CD8-positive, alpha-beta memory T cell (primary cell): ENCODE measurements at regions of chr17 and their contacts with region 1.

Region 1: GRCh38 chr17:40086150-40087044 is 14.0 kb downstream of the NR1D1 start:
- DNase-seq: peak in 4 of 5 donors; percentile 45 to 73 (median 54)
- H3K4me3 ChIP-seq: no peak overlapping the region
- H3K4me3 Mint-ChIP-seq: no peak overlapping the region
- H3K27ac ChIP-seq: no peak overlapping the region
- H3K27ac Mint-ChIP-seq: peak overlapping the region in 6 of 8 donors; percentile 11 to 78 (median 46)
- H3K4me1 ChIP-seq: peaks cover 6% of the 10 kb centered on the region
- H3K4me1 Mint-ChIP-seq: peaks cover 5 to 13% (median 12%) of the 10 kb centered on the region in 3 donors
- H3K27me3 ChIP-seq: no peaks in the 10 kb centered on the region
- H3K27me3 Mint-ChIP-seq: no peaks in the 10 kb centered on the region

Region 2: DNA sequence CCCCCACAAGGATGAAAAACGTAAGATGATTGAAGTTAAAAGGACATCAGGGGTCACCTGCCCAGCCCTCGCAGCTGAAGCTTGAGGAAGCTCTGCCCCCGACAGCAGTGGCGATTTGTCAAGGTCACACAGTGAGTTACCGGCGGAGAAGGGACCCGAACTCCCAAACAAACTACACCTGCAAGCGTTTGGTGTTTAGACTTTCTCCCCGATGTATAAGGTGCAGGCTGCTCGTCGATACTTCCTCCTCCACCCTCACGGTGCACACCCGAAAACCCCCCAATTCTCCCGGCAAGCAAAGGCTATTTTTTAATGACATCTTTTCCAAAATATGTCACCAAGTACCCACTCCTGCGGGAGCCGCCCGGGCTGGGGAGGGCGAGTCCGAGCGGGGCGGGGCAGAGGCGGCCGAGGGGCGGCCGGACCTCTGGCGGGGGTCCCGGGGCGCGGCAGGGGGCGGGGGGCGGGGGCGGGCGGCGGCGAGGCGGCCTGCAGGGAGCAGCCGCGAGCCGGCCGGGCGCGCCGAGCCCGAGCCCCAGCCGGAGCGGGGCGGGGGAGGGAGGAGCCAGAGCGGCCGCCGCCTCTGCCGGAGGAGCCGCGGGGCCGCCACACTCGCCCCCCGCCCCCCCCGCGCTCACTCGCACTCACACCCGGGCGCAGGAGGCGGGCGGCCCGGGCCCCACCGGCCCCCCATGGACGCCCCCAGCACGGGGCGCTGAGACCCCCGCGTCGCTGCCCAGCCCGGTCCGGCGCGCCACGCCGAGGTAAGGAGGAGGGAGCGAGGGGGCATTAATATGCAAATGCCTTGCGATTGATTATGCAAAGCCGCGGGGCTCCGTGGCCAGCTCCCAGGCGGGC is 23.8 kb before region 1 on chr17 and contains the start of gene THRA:
- CTCF ChIA-PET with region 1: interaction called, 23 read pairs
- POLR2A ChIA-PET with region 1: interaction called, 11 read pairs
- DNase-seq: peak; percentile 64 to 81 (median 70)
- H3K4me3 ChIP-seq: peak within 1 kb of the TSS; percentile 81
- H3K4me3 Mint-ChIP-seq: peak within 1 kb of the TSS; percentile 88 to 97 (median 91)
- H3K27ac ChIP-seq: peak within 1 kb of the TSS; percentile 73
- H3K27ac Mint-ChIP-seq: peak within 1 kb of the TSS; percentile 80 to 97 (median 90)
- H3K4me1 ChIP-seq: peaks cover 46% of the 10 kb centered on the region
- H3K4me1 Mint-ChIP-seq: peaks cover 37 to 49% (median 41%) of the 10 kb centered on the region in 3 donors
- H3K27me3 ChIP-seq: no peaks in the 10 kb centered on the region
- H3K27me3 Mint-ChIP-seq: peaks cover 0 to 2% of the 10 kb centered on the region in 2 donors
- total RNA-seq, gene THRA: 12.6 to 13.2 TPM

Region 3: GRCh38 chr17:40068917-40069750 is 17.3 kb before region 1 on chr17:
- CTCF ChIA-PET with region 1: interaction called, 23 read pairs
- POLR2A ChIA-PET with region 1: interaction called, 11 read pairs
- DNase-seq: peak; percentile 55 to 86 (median 66)
- H3K4me3 ChIP-seq: peak overlapping the region; percentile 68
- H3K4me3 Mint-ChIP-seq: peak overlapping the region; percentile 81 to 91 (median 88)
- H3K27ac ChIP-seq: peak overlapping the region; percentile 58
- H3K27ac Mint-ChIP-seq: peak overlapping the region; percentile 88 to 98 (median 96)
- H3K4me1 ChIP-seq: peaks cover 82% of the 10 kb centered on the region
- H3K4me1 Mint-ChIP-seq: peaks cover 62 to 86% (median 69%) of the 10 kb centered on the region in 3 donors
- H3K27me3 ChIP-seq: no peaks in the 10 kb centered on the region
- H3K27me3 Mint-ChIP-seq: no peaks in the 10 kb centered on the region

Region 4: GRCh38 chr17:40450175-40450574 is 363.8 kb after region 1 on chr17:
- CTCF ChIA-PET with region 1: no interaction called
- POLR2A ChIA-PET with region 1: no interaction called
- DNase-seq: peak in 2 of 5 donors; percentile 14
- H3K4me3 ChIP-seq: no peak overlapping the region
- H3K4me3 Mint-ChIP-seq: no peak overlapping the region
- H3K27ac ChIP-seq: no peak overlapping the region
- H3K27ac Mint-ChIP-seq: no peak overlapping the region
- H3K4me1 ChIP-seq: peaks cover 24% of the 10 kb centered on the region
- H3K4me1 Mint-ChIP-seq: peaks cover 23 to 25% (median 23%) of the 10 kb centered on the region in 3 donors
- H3K27me3 ChIP-seq: no peaks in the 10 kb centered on the region
- H3K27me3 Mint-ChIP-seq: peaks cover under 1 to 3% of the 10 kb centered on the region in 2 donors